Cardiac septum (tissue), 1 donor: ENCODE measurements at regions of chr5 and their contacts with region 1.

Region 1: DNA sequence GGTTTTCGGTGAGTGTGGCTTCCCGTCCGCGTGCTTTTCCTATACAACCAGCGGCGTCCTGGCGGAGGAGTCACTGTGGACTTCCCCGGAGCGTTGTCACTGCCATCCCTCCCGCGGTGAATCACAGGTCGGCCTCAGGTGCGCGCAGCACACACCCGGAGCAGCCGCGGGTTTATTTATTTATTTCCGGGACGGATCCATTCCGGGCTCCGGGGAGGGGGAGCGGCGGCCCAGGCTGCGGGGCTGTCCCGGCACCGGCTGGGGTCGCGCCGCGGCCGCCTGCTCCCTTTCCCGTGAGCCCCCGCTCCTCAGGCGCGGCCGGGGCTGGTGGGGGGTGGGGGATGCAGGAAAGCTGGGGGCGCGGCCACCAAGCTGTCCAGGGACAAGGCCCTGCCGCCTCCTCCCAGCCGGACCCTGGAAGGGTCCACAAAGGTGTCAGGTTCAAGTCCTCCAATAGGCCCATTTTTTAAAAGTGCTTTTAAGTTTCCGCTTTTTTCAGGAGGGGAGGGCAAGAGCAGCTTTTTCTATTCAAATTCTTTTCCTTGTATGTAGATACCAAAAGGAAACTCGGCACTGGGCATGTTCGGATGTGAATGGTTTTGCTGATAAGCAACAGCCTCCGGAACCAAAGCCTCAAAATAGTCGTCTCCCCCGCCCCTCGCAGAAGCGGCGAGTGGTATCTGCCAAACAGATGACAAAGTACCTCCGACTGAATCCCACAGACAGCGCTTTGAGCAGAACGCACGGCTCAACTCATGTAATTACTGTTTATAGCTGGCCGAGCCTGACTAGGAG is 192.5 kb downstream of the CD180 start:
- DNase-seq: peak; percentile 93

Region 2: DNA sequence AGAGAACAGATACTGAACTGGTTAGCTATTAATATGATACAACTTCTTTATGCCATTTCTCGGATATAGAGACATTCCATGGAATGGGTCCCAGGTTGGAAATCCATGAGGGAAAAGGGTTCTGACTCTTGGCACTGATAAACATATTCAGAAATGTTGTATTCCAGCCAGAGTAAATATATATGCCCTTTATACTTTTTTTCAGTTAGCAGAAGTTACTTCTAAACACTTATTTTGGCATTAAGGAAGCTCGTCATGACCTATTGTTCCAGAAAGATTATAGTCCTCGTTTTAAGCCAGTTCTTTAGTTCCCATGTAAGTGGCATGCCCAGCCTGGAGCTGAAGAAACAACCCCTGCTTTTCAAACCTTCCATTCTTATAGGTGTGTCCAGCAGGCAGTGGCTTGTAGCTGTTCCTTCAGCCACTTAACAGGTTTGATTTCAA is 10.8 kb after region 1 on chr5:
- intact Hi-C with region 1: loop called (anchors 1 kb)
- DNase-seq: no peak

Region 3: DNA sequence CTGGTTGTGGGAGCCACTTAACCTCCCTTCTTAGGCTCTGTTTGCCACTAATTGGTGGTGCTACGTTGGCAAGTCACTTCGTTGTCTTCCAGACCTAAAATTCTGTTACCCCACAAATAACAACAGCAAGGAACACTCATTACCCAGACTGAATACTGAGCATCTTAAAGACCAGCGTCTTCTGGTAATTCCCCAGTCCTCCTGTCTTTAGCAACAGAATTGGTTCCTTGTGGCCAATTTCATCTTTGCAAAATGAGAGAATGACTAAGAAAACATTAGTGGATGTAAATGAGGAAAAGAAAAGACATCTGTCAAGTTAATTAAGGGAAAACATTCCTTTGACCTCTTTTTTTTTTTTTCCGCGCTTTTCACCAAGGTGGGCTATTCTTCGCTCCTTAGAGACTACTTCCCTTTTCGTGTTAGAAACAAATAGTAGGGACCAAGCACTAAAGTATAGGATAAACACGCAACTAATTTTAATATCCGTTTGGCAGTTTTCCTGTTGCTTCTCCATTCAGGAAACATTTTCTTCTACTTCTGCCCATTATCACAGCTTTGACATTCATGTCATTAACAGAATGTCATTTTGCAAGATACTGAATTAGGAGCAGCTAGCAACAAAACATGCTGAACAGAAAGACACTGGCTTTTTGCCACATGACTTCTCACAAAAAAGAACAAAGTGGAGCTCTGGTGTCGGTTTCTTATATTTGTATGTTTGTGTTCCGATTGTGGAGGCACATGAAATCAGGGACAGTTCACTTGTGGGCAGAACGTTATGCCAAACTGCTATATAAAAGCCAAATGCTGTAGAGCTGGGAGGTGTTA is 38.3 kb after region 1 on chr5:
- intact Hi-C with region 1: loop called (anchors 5 kb)
- DNase-seq: no peak

Region 4: GRCh38 chr5:67059744-67060490 is 55.8 kb after region 1 on chr5:
- intact Hi-C with region 1: loop called (anchors 5 kb)
- DNase-seq: no peak

Region 5: GRCh38 chr5:67095346-67096171 is 91.4 kb after region 1 on chr5:
- intact Hi-C with region 1: loop called (anchors 2 kb)
- DNase-seq: peak; percentile 81